Heart right ventricle (tissue), 16 donors: ENCODE measurements at regions of chr2 and their contacts with region 1.

Region 1: DNA sequence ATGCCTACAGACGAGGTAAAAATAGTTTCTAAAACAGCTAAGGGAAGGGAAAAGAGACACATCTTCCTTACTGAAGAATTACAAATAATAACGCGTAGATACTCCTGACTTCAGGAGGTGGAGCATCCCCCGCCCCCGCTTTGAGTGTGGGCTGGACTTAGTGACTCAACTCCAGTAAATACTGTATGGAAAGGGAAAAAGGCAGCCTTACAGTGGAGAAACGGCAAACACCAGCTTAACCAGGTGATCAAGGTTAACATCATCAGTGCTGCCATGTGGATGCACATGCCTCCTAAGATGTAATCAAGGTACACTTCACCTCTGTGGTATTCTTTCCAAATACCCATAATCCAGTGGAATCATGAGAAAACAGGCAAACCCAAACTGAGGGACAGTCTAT is 47.9 kb downstream of the HADHB start:
- DNase-seq: no peak
- ATAC-seq: peak in 1 of 8 donors; percentile 40
- H3K4me3 ChIP-seq: no peak overlapping the region
- H3K27ac ChIP-seq: no peak overlapping the region
- H3K4me1 ChIP-seq: peaks cover 0 to 8% (median 0%) of the 10 kb centered on the region in 9 donors
- H3K27me3 ChIP-seq: no peaks in the 10 kb centered on the region
- CTCF ChIP-seq: no peak

Region 2: DNA sequence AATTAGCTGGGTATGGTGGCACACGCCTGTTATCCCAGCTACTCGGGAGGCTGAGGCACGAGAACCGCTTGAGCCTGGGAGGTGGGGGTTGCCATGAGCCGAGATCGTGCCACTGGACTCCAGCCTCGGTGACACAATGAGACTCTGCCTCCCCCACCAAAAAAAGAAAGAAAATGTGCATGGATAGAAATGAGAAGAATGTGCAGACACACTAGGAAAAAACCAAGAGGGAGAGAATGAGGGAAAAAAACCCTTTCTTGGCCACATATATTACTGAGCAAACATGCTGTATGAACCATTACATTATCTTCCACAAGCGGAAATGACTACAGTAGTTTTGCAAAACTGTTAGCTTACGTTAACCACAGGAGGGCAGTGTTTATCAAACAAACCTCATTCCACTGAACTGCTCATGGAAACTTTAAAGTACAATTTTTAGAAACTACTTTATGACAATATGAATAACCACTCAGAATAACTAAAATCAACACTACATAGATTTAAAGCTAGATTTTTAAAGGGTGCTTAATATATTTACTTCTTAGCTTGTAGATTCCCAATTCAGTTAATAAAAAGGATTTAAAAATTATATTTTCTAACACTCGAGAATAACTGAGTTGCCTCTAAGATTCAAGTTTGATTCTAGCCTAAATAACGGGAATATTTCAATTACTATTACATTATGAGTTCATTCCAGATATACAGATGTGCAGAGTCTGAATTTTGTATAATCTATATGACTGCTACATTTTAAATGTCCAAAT is 440.7 kb before region 1 on chr2:
- intact Hi-C with region 1: no loop called
- DNase-seq: peak in 1 of 2 donors; percentile 34
- ATAC-seq: peak in 7 of 8 donors; percentile 81 to 92 (median 87)
- H3K4me3 ChIP-seq: peak overlapping the region in 1 of 10 donors; percentile 3
- H3K27ac ChIP-seq: peak overlapping the region in 1 of 10 donors; percentile 60
- H3K4me1 ChIP-seq: peaks cover 0 to 45% (median 13%) of the 10 kb centered on the region in 9 donors
- H3K27me3 ChIP-seq: no peaks in the 10 kb centered on the region
- CTCF ChIP-seq: peak; percentile 43 to 84 (median 71)

Region 3: GRCh38 chr2:26214759-26215158 is 77.9 kb before region 1 on chr2:
- intact Hi-C with region 1: loop called in 2 of 10 experiments (anchors 5 to 10 kb)
- DNase-seq: no peak
- ATAC-seq: no peak
- H3K4me3 ChIP-seq: no peak overlapping the region
- H3K27ac ChIP-seq: no peak overlapping the region
- H3K4me1 ChIP-seq: peaks cover 0 to 5% (median 0%) of the 10 kb centered on the region in 9 donors
- H3K27me3 ChIP-seq: no peaks in the 10 kb centered on the region
- CTCF ChIP-seq: no peak

Region 4: GRCh38 chr2:26712486-26713465 is 420.1 kb after region 1 on chr2:
- intact Hi-C with region 1: no loop called
- DNase-seq: peak in 1 of 2 donors; percentile 39
- ATAC-seq: peak in 6 of 8 donors; percentile 31 to 55 (median 42)
- H3K4me3 ChIP-seq: no peak overlapping the region
- H3K27ac ChIP-seq: peak overlapping the region in 6 of 10 donors; percentile 12 to 76 (median 59)
- H3K4me1 ChIP-seq: peaks cover 5 to 44% (median 24%) of the 10 kb centered on the region in 9 donors
- H3K27me3 ChIP-seq: no peaks in the 10 kb centered on the region
- CTCF ChIP-seq: no peak